Colonic mucosa (tissue), 4 donors: ENCODE measurements at regions of chr15 and their contacts with region 1.

Region 1: DNA sequence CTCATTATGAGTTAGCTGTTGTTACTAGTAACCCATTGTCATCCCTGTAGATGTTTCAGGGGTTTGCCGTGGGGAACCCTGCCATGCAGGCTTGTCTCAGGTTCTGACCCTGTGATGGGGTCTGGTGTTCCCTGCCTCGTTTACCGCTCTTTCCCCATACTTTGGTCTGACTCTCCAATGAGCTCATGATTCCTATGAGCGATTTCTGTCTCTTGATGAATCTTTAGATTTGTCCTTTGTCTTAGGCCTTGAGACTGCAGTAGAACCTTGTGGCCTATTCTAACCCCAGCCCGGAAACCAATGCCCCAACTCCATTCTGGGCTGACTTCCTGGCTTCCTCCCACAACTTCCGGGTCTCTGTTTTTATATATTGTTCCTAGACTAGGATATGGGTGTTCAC is 11.3 kb upstream of the IQGAP1 start:
- DNase-seq: no peak
- H3K4me3 ChIP-seq: no peak overlapping the region
- H3K27ac ChIP-seq: no peak overlapping the region
- H3K4me1 ChIP-seq: no peaks in the 10 kb centered on the region
- H3K27me3 ChIP-seq: no peaks in the 10 kb centered on the region
- CTCF ChIP-seq: no peak

Region 2: DNA sequence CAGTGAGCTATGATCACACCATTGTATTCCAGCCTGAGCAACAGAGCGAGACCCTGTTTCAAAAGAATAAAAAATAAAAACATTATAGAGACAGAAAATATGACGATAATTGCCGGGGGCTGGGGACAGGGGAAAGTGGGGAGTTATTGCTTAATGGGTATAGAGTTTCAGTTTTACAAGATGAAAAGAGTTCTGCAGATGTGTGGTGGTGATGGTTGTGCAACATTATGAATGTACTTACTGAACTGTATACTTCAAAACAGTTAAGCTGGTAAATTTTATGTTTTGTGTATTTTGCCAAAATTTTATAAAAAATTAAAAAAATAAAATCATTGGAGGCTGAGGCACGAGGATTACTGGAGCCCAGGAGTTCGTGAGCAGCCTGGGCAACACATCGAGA is 49.5 kb before region 1 on chr15:
- intact Hi-C with region 1: loop called (anchors 5 kb)
- DNase-seq: peak; percentile 1
- H3K4me3 ChIP-seq: no peak overlapping the region
- H3K27ac ChIP-seq: no peak overlapping the region
- H3K4me1 ChIP-seq: no peaks in the 10 kb centered on the region
- H3K27me3 ChIP-seq: no peaks in the 10 kb centered on the region
- CTCF ChIP-seq: no peak